Sigmoid colon (tissue), 7 donors: ENCODE measurements at regions of chr16 and their contacts with region 1.

Region 1: DNA sequence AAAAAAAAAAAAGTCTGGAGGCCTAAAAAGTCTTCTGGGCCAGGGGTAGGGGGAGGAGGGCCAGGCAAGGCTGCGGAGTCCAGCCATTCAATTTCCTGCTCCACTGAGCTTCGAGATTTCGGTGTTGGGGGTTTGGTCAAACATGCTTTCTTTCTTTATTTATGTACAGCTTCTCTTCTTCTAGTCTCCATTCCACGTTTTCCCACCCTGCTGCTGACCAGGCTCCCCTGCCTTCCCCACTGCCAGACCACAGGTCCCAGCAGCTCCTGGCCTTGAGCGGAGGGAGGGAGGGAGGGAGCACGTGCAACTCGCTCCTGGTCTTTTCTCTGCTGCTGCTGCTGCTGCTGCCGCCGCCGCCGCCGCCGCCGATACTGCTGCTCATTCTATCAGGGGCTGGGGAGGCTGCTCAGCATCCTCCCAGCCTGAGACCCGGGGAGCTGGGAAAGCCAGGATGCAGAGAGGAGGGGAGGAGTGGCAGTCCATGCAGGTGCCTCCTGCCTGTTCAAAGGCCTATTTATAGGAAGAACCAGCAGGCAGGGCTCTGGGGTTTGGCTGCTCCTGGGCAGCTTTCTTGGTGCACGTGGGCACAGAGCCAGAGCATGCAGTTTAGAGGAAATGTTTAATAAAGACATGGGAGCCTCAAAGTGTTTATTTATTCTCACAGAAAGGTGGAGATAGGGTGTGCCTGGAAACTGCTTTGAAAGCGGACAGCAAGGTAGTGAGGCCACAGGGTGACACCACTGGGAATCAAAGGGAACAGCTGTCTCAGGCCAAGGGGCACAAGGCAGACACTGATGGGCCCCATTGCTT is 23.4 kb upstream of the ZFHX3 start:
- DNase-seq: peak; percentile 87
- H3K4me3 ChIP-seq: peak overlapping the region in 3 of 4 donors; percentile 29 to 37 (median 30)
- H3K27ac ChIP-seq: peak overlapping the region; percentile 78 to 98 (median 89)
- H3K4me1 ChIP-seq: peaks cover 0 to 53% (median 46%) of the 10 kb centered on the region in 4 donors
- H3K27me3 ChIP-seq: peaks cover 0 to 8% (median 0%) of the 10 kb centered on the region in 3 donors
- CTCF ChIP-seq: no peak
- EP300 ChIP-seq: no peak
- POLR2A ChIP-seq: no peak

Region 2: GRCh38 chr16:73172241-73172972 is 101.1 kb after region 1 on chr16:
- intact Hi-C with region 1: loop called (anchors 5 kb)
- DNase-seq: peak; percentile 89
- H3K4me3 ChIP-seq: no peak overlapping the region
- H3K27ac ChIP-seq: peak overlapping the region; percentile 53 to 70 (median 66)
- H3K4me1 ChIP-seq: peaks cover 0 to 22% (median 15%) of the 10 kb centered on the region in 4 donors
- H3K27me3 ChIP-seq: no peaks in the 10 kb centered on the region
- CTCF ChIP-seq: peak in 1 of 4 experiments; percentile 17
- EP300 ChIP-seq: no peak
- POLR2A ChIP-seq: no peak